ENCODE measurements at regions of chr3 and their contacts with region 1.

Region 1: DNA sequence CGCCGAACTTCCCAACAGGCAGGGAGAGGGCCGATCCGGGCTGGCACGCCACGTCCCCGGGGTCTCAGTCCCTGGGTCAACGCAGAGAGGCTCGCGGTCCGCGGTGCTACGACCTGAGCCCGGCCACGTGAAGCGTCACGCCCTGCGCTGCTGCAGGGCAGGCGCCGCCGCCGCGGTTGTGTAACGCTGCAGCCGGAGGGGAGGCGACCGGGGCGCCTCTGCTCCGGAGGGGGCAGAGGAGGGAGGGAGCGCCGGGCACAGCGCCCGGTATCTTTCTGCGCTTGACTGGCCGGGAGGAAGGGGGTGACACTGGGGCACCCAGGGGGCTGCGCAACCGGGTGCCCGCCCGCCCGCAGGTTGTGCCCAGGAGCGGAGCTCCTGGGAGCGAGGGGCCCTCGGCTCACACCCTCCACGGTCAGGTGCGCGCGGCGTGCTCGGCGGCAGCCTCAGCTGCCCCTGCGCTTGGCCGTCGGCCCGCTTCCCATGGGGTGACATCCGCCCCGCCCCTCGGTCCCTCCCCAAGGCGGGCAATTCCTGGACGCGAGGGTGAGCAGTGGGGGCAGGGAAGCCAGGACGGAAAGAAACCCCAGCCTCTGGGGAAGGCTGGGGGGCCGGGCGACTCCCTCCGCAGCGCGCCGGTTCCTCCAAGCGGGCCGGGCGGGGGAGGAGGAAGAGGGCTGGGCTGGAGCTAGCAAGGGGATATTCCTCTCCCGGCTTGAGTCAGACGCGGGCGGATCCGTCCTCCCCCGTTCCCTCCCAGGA is 852 bp upstream of the BHLHE40 start:
- DNase-seq: peak; percentile 84
- H3K4me3 Mint-ChIP-seq: peak overlapping the region; percentile 87
- H3K27ac Mint-ChIP-seq: peak overlapping the region; percentile 100
- H3K4me1 Mint-ChIP-seq: peaks cover 34% of the 10 kb centered on the region
- H3K27me3 Mint-ChIP-seq: no peaks in the 10 kb centered on the region

Region 2: GRCh38 chr3:4712143-4712542 is 266.2 kb before region 1 on chr3:
- intact Hi-C with region 1: loop called (anchors 1 kb)
- DNase-seq: no peak
- H3K4me3 Mint-ChIP-seq: no peak overlapping the region
- H3K27ac Mint-ChIP-seq: no peak overlapping the region
- H3K4me1 Mint-ChIP-seq: peaks cover 28% of the 10 kb centered on the region
- H3K27me3 Mint-ChIP-seq: no peaks in the 10 kb centered on the region

Region 3: DNA sequence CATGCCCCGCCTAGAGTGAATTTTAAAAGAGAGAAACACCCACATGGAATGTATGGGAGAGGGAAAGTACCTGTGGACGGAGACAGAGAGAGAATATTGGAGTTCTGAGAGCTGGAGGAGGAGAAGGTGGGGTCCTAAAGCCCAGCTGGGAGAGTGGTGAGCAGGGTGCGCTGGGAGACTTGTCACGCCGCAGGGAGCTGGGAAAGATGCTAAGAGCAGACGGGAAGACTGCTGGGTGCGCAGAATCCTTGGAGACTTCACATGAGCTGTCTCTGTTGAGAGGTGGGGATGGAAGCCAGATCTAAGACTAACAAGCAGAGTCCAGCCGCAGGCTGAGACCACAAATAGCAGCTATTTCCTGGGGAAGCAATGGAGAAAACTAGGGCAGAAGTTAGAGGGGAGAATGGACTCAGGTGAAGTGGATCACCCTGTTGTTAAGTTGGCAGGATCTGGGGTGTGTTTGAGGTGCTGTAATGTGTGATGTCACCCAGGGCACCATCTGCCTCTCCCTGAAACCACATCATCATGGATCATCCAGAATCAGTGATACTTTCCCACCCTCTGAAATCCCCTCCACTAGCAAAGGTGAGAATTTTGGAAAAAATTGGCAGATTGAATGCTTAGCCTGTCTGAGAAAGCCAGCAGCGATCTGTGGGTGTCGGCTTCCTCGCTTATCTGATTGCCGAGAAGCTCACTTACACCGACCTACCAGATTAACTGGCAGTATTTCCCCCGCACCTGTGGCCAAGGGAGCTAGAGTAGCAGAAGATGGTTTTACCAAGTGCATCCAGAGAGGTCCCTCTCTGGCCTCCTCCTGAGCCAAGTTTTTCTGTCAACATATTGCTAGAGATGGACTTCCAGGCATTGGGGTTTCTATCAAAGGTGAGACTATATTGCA is 174.0 kb before region 1 on chr3:
- intact Hi-C with region 1: loop called (anchors 1 kb)
- DNase-seq: peak; percentile 31
- H3K4me3 Mint-ChIP-seq: peak overlapping the region; percentile 35
- H3K27ac Mint-ChIP-seq: peak overlapping the region; percentile 78
- H3K4me1 Mint-ChIP-seq: peaks cover 62% of the 10 kb centered on the region
- H3K27me3 Mint-ChIP-seq: no peaks in the 10 kb centered on the region

Region 4: DNA sequence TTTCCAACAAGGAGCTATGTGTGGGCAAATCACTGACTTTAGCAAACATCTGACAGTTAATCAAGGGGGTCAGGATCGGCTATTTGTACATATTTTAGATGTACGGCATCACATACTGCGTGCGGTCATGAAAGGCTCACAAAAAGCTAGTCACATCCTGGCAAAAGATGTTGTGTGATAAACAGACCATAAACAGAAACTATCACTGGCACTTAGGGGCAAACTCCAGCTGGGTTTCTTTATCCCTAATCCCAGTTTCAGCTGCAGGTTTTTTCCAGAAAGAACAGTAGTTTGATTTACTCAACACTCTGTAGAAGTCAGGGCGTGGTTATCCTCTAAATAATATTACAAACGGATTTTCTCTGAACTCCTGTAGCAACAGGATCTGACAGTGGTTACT is 111.5 kb before region 1 on chr3:
- intact Hi-C with region 1: no loop called
- DNase-seq: no peak
- H3K4me3 Mint-ChIP-seq: peak overlapping the region; percentile 82
- H3K27ac Mint-ChIP-seq: peak overlapping the region; percentile 92
- H3K4me1 Mint-ChIP-seq: peaks cover 48% of the 10 kb centered on the region
- H3K27me3 Mint-ChIP-seq: no peaks in the 10 kb centered on the region

Region 5: GRCh38 chr3:4888913-4889846 is 89.2 kb before region 1 on chr3:
- intact Hi-C with region 1: loop called (anchors 1 kb)
- DNase-seq: peak; percentile 34
- H3K4me3 Mint-ChIP-seq: peak overlapping the region; percentile 17
- H3K27ac Mint-ChIP-seq: peak overlapping the region; percentile 91
- H3K4me1 Mint-ChIP-seq: peaks cover 58% of the 10 kb centered on the region
- H3K27me3 Mint-ChIP-seq: no peaks in the 10 kb centered on the region

Region 6: GRCh38 chr3:4956738-4957137 is 21.6 kb before region 1 on chr3:
- intact Hi-C with region 1: no loop called
- DNase-seq: no peak
- H3K4me3 Mint-ChIP-seq: no peak overlapping the region
- H3K27ac Mint-ChIP-seq: no peak overlapping the region
- H3K4me1 Mint-ChIP-seq: no peaks in the 10 kb centered on the region
- H3K27me3 Mint-ChIP-seq: no peaks in the 10 kb centered on the region

Region 7: GRCh38 chr3:5006755-5007202 is 28.4 kb after region 1 on chr3:
- intact Hi-C with region 1: loop called (anchors 1 kb)
- DNase-seq: peak; percentile 72
- H3K4me3 Mint-ChIP-seq: peak overlapping the region; percentile 37
- H3K27ac Mint-ChIP-seq: peak overlapping the region; percentile 76
- H3K4me1 Mint-ChIP-seq: peaks cover 48% of the 10 kb centered on the region
- H3K27me3 Mint-ChIP-seq: no peaks in the 10 kb centered on the region

Region 8: DNA sequence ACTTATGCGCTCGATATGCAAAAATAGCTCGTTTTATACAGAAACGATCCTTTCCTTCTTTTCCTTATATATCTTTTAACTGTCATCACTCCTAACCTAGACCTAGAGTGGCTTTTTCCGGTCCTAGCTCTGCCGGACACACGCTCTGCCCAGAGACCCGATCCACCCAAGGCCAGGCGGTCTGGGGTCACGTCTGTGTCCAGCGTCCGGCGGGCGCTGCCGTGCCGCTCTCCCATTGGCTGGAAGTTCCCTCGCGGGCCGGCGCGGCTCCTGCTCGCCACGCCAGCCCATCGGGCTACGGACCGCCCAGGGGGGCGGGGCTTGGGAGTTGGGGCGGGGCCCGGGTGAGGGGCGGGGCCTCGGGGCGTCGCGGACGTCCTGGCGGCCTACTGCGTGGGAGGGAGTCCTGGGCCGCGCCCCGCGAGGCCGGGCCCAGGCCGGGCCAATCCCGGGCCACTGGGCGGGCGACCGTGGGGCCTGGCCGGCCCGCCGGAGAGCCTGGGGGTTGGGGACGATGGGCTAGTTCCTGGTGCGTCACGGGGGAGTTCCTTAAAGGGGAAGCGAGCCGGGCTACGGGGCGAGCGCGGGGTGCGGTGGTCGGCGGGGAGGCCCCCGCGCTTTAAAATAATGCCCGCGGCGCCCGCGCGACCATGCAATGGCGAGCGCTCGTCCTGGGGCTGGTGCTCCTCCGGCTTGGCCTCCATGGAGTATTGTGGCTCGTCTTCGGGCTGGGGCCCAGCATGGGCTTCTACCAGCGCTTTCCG is 209.0 kb after region 1 on chr3 and contains the start of gene EDEM1:
- intact Hi-C with region 1: loop called (anchors 1 kb)
- DNase-seq: peak; percentile 95
- H3K4me3 Mint-ChIP-seq: peak within 1 kb of the TSS; percentile 99
- H3K27ac Mint-ChIP-seq: peak within 1 kb of the TSS; percentile 100
- H3K4me1 Mint-ChIP-seq: peaks cover 27% of the 10 kb centered on the region
- H3K27me3 Mint-ChIP-seq: no peaks in the 10 kb centered on the region
- total RNA-seq, gene EDEM1: 183 and 187 TPM in 2 replicates

Measured in activated T-helper 2 cell treated with anti-CD3 and anti-CD28 coated beads, Interferon-gamma antibody, Interleukin-2, Interleukin-4, amounts not matched to agents 10 μg/mL and 5 μg/mL and 100 μg/mL, durations not matched to agents 14 hours and 24 hours and 36 hours (primary cell).